ENCODE measurements at regions of chr3 and their contacts with region 1.

Region 1: DNA sequence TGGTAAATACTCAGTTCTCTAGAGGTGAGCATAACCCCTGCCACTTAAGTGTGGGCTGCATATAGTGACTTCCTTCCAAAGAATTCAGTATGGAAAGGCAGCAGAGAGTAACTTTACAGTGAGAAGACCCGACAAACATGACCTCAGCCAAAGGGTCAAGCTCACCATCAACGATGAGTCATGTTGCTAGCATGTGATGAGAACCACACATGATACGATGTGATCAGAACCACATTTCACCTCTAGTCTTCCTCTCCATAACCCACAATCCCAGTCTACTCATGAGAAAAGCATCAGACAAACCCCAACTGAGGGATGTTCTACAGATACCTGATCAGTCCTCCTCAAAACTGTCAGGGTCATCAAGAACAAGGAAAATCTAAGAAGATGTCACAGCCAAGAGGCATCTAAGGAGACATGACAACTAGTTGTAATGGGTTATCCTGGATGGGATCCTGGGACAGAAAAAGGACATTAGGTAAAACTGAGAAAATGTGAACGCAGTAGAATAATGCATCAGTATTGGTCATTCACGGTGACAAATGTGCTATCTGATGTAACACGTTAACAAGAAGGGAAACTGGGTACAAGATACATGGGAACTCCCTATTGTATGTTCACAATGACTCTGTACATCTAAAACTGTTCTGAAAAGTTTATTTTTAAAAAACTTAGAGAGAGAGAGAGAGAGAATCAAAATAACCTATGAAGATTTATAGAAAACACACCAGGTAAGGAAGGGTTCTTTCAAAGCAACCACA is 28.3 kb downstream of the SEC61A1 start:
- DNase-seq: no peak
- H3K4me3 ChIP-seq: no peak overlapping the region
- H3K27ac ChIP-seq: no peak overlapping the region
- H3K4me1 ChIP-seq: no peaks in the 10 kb centered on the region
- H3K27me3 ChIP-seq: no peaks in the 10 kb centered on the region
- CTCF ChIP-seq: no peak
- POLR2A ChIP-seq: no peak

Region 2: DNA sequence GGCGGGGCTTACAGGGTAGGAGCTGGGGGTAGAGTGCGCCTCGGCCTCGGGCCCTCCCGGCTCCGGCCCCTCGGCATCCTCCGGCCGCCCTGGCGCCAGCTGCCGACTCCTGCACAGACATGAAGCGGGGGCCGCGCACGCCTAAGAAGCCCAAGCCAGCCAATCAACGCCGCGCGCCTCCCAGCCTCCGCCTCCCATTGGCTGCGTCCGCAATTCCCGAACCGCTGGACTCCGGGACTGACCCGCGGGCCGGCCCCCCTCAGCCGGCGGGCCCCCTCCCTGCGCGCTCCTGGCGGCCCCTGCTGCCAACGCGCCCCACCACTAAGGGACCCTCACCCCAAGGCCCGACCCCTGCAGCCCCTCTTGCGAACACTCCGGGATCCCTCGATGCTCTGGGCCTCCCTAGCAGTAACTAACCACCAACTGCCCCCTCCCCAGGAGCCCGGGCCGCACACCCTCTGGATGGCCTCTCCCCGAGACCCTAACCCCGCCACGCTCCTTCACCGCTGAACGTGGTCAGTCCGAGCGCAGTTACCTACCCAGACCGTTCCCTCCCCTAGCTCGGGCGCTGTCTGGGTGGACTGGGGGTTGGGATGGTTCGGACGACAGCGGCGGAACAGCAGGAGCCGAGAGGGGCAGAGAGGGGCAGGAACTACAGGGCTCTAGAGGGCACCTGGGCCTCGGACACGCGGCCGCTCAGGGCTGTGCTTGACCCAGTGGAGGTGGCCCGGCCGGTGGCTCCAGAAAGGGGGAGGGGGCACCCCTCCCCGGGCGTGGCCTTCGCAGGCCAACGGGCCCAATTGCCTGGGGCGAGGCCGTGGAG is 407.5 kb after region 1 on chr3:
- intact Hi-C with region 1: loop called (anchors 10 kb)
- DNase-seq: peak; percentile 56 to 72
- H3K4me3 ChIP-seq: peak overlapping the region; percentile 50 to 76 (median 55)
- H3K27ac ChIP-seq: peak overlapping the region in 1 of 2 donors; percentile 77
- H3K4me1 ChIP-seq: peaks cover 17 to 21% of the 10 kb centered on the region in 2 donors
- H3K27me3 ChIP-seq: peaks cover 8 to 100% of the 10 kb centered on the region in 2 donors
- CTCF ChIP-seq: no peak
- POLR2A ChIP-seq: no peak